Activated CD4-positive, alpha-beta T cell treated with anti-CD3 and anti-CD28 coated beads, Interleukin-2, amount 10 ng/mL, durations not matched to agents 24 days and 14 days (primary cell): ENCODE measurements at regions of chr5 and their contacts with region 1.

Region 1: GRCh38 chr5:88883059-88883835 is at the start of gene MEF2C:
- DNase-seq: peak; percentile 59
- H3K4me3 Mint-ChIP-seq: peak within 1 kb of the TSS; percentile 82
- H3K27ac Mint-ChIP-seq: peak within 1 kb of the TSS; percentile 8
- H3K4me1 Mint-ChIP-seq: peaks cover 20% of the 10 kb centered on the region
- H3K27me3 Mint-ChIP-seq: peaks cover 64% of the 10 kb centered on the region
- total RNA-seq, gene MEF2C: 0.33 and 0.71 TPM in 2 replicates

Region 2: DNA sequence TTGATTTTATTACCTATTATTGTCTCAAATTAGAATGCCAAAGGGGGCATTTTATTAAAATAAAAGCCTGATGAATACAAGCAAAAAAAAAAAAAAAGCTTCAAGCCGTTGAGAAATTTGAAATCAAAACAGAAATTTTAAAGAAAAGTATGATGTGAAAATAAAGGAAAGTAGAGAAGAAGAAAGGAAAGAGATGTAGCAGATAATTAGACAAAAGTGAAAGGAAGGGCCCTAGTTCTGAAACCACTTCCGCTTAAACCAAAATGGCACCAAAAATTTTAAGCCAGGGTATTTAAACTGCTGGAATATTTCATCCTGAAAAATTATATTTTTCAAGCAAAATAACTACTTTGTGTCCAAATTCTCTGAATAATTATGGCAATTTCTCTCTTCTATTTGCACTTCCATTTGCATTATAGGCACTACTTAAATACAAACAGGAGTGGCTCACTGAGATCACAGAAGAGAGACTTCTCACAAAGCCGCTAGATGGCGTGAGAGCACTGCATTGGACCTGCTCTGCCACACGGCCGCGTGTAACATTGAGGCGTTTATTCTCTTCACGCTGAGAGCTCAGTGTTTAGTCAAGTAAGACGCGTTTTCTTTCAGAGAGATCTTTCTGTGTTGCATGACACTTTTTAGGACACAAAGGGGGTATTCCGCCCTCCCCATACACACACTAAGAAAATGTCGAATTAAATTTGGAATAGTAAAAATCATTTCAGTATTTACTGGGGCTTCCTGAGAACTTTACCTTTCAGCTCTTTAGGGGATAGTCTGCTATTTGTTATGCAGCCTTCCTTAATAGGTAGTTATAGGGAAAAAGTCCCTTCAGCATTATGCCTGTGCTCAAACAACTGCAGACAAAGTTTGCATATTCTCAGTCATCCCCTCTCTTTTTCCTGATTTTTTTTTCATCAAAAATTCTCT is 1102.2 kb before region 1 on chr5:
- intact Hi-C with region 1: loop called (anchors 10 kb)
- DNase-seq: peak; percentile 92
- H3K4me3 Mint-ChIP-seq: no peak overlapping the region
- H3K27ac Mint-ChIP-seq: no peak overlapping the region
- H3K4me1 Mint-ChIP-seq: peaks cover 2% of the 10 kb centered on the region
- H3K27me3 Mint-ChIP-seq: peaks cover 12% of the 10 kb centered on the region

Region 3: GRCh38 chr5:88690409-88691229 is 192.6 kb before region 1 on chr5:
- intact Hi-C with region 1: loop called (anchors 5 kb)
- DNase-seq: peak; percentile 89
- H3K4me3 Mint-ChIP-seq: peak overlapping the region; percentile 43
- H3K27ac Mint-ChIP-seq: peak overlapping the region; percentile 88
- H3K4me1 Mint-ChIP-seq: peaks cover 7% of the 10 kb centered on the region
- H3K27me3 Mint-ChIP-seq: peaks cover 91% of the 10 kb centered on the region

Region 4: DNA sequence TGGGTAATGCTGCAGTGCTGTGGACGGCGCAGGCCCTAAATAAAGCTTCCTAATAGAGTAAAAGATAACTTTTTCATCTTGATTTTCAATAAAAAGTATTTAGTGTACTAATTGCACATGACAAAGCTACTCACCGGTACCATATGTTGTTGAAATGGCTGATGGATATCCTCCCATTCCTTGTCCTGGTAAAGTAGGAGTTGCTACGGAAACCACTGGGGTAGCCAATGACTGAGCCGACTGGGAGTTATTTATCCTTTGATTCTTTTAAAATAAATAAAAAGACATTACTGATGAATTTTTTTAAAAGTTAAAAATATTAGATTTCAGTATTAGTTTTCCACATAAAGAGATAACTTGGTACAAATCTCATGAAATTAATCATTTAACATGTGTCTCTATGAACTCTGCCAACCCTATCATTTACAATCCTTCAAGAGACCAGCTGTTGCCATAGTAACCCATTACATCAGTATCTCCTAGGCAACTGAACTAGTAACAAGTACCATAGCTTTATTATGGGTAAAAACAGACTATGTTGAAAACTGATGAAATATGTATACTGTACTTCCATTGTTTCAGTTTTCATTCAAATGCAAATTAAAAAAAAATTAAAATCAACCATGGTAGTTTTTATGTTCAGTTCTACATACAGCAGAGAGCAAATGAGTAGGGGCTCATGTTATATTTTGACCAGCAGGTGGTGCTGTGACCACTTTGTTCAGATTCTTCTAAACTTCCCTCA is 154.0 kb before region 1 on chr5:
- intact Hi-C with region 1: loop called (anchors 5 kb)
- DNase-seq: peak; percentile 85
- H3K4me3 Mint-ChIP-seq: no peak overlapping the region
- H3K27ac Mint-ChIP-seq: no peak overlapping the region
- H3K4me1 Mint-ChIP-seq: peaks cover 2% of the 10 kb centered on the region
- H3K27me3 Mint-ChIP-seq: peaks cover 10% of the 10 kb centered on the region

Region 5: DNA sequence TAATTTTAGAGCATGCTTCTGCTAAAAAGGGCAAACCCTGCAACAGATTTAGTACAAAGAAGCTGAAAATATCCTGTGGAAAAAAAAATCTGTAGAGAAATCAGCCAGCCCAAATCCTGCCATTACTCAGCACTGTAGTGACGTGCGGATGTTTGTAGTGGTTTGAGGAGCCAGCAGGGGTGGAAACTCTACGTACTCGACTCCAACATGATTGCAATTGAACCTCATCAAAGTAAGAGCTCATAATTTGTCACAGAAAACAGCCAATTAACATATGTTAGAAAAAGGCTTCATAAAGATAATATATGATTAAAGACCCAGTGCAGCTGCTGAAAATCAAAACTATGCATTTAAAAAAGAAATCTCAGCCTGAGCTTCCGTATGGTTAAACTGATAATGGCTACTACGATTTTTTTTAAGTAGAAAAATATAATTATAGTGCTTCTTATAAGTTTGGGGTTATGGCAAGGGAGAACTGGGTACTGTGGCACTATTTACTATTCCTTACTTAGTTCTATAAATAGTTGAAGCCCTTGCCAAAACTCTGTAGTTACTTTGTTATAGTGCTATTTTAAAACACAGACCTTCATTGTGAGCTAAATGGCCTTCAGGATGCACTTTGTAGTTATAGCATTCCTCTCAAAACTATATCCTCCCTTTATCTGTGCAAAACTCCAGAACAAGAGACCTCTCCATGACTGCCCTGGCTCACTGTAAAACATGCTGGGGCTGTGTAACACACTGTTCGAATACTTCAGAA is 49.7 kb before region 1 on chr5:
- intact Hi-C with region 1: loop called (anchors 5 kb)
- DNase-seq: peak; percentile 73
- H3K4me3 Mint-ChIP-seq: no peak overlapping the region
- H3K27ac Mint-ChIP-seq: no peak overlapping the region
- H3K4me1 Mint-ChIP-seq: peaks cover 16% of the 10 kb centered on the region
- H3K27me3 Mint-ChIP-seq: peaks cover 2% of the 10 kb centered on the region

Region 6: GRCh38 chr5:88925692-88926490 is 42.6 kb after region 1 on chr5:
- intact Hi-C with region 1: no loop called
- DNase-seq: no peak
- H3K4me3 Mint-ChIP-seq: no peak overlapping the region
- H3K27ac Mint-ChIP-seq: no peak overlapping the region
- H3K4me1 Mint-ChIP-seq: no peaks in the 10 kb centered on the region
- H3K27me3 Mint-ChIP-seq: no peaks in the 10 kb centered on the region

Region 7: GRCh38 chr5:89324990-89325389 is 441.7 kb after region 1 on chr5:
- intact Hi-C with region 1: no loop called
- DNase-seq: no peak
- H3K4me3 Mint-ChIP-seq: no peak overlapping the region
- H3K27ac Mint-ChIP-seq: no peak overlapping the region
- H3K4me1 Mint-ChIP-seq: no peaks in the 10 kb centered on the region
- H3K27me3 Mint-ChIP-seq: no peaks in the 10 kb centered on the region